Ovary (tissue), 10 donors: ENCODE measurements at regions of chr9 and their contacts with region 1.

Region 1: GRCh38 chr9:34899535-34900158 is 58.4 kb upstream of the PHF24 start:
- DNase-seq: peak; percentile 50 to 79 (median 73)
- H3K4me3 ChIP-seq: no peak overlapping the region
- H3K27ac ChIP-seq: no peak overlapping the region
- H3K4me1 ChIP-seq: no peaks in the 10 kb centered on the region
- H3K27me3 ChIP-seq: no peaks in the 10 kb centered on the region
- CTCF ChIP-seq: peak; percentile 48 to 56 (median 51)
- EP300 ChIP-seq: no peak
- POLR2A ChIP-seq: no peak

Region 2: GRCh38 chr9:34809504-34810186 is 90.0 kb before region 1 on chr9:
- intact Hi-C with region 1: no loop called
- DNase-seq: no peak
- H3K4me3 ChIP-seq: no peak overlapping the region
- H3K27ac ChIP-seq: no peak overlapping the region
- H3K4me1 ChIP-seq: peaks cover 2% of the 10 kb centered on the region
- H3K27me3 ChIP-seq: no peaks in the 10 kb centered on the region
- CTCF ChIP-seq: no peak
- EP300 ChIP-seq: no peak
- POLR2A ChIP-seq: no peak

Region 3: GRCh38 chr9:34989003-34989945 is 89.6 kb after region 1 on chr9 and contains the start of gene DNAJB5:
- intact Hi-C with region 1: loop called in 1 of 4 experiments (anchors 10 kb)
- DNase-seq: peak; percentile 97 to 99 (median 98)
- H3K4me3 ChIP-seq: peak within 1 kb of the TSS; percentile 79
- H3K27ac ChIP-seq: peak within 1 kb of the TSS; percentile 50 to 69
- H3K4me1 ChIP-seq: peaks cover 16% of the 10 kb centered on the region
- H3K27me3 ChIP-seq: no peaks in the 10 kb centered on the region
- CTCF ChIP-seq: no peak
- EP300 ChIP-seq: peak; percentile 8
- POLR2A ChIP-seq: peak; percentile 79
- total RNA-seq, gene DNAJB5: 6.4 to 21.0 (median 11.8) TPM

Region 4: GRCh38 chr9:35096035-35096849 is 196.6 kb after region 1 on chr9 and contains the start of gene PIGO:
- intact Hi-C with region 1: loop called in 2 of 4 experiments (anchors 5 kb)
- DNase-seq: peak; percentile 83 to 92 (median 86)
- H3K4me3 ChIP-seq: peak within 1 kb of the TSS; percentile 97
- H3K27ac ChIP-seq: peak within 1 kb of the TSS; percentile 75 to 92
- H3K4me1 ChIP-seq: peaks cover 6% of the 10 kb centered on the region
- H3K27me3 ChIP-seq: no peaks in the 10 kb centered on the region
- CTCF ChIP-seq: peak; percentile 75 to 90 (median 76)
- EP300 ChIP-seq: no peak
- POLR2A ChIP-seq: peak; percentile 45
- total RNA-seq, gene PIGO: 12.9 to 22.8 (median 19.6) TPM

Region 5: GRCh38 chr9:35161713-35162604 is 262.3 kb after region 1 on chr9 and contains the start of gene UNC13B:
- intact Hi-C with region 1: loop called in 1 of 4 experiments (anchors 10 kb)
- DNase-seq: peak; percentile 91 to 97 (median 96)
- H3K4me3 ChIP-seq: peak within 1 kb of the TSS; percentile 88
- H3K27ac ChIP-seq: peak within 1 kb of the TSS; percentile 55 to 75
- H3K4me1 ChIP-seq: peaks cover 5% of the 10 kb centered on the region
- H3K27me3 ChIP-seq: no peaks in the 10 kb centered on the region
- CTCF ChIP-seq: peak in 1 of 3 donors; percentile 14
- EP300 ChIP-seq: no peak
- POLR2A ChIP-seq: peak; percentile 61
- total RNA-seq, gene UNC13B: 8.0 to 22.2 (median 16.6) TPM

Region 6: DNA sequence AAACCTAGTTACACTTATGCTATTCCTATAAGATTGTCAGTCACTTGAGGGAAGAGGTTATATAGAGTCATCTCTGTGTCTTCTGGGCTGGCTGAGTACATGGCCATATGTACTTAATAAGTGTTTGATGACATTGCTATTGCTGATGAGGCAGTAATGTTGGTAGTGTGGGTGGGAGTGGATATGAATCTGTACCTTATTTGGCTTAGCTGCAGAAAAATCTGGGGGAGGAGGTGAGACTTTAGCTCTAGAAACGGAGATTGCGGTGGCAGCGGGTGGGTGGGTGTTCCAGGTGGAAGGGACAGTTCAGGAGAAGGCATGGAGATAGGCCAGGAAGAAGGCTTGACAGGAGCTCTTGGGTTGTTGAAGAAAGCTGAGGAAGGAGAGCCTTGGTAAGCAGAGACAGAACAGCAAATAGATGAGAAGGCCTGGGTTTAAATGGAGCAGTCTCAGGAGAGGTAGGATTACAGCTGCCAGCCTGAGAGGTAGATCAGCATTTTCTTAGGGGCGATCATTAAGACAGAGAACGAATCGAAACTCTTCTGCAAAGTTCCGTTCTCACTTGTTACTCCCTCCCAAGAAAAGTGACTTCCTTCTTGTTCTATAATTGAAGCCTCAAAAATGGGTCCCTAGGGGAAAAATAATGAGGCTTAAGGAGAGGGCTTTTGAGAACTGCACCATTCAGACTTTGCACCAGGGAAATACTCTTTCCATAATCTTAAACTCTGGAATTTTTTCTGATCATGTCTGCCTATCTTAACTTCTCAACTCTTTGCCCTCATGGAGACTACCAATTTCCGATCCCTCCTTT is 422.6 kb after region 1 on chr9:
- intact Hi-C with region 1: no loop called
- DNase-seq: no peak
- H3K4me3 ChIP-seq: no peak overlapping the region
- H3K27ac ChIP-seq: no peak overlapping the region
- H3K4me1 ChIP-seq: no peaks in the 10 kb centered on the region
- H3K27me3 ChIP-seq: no peaks in the 10 kb centered on the region
- CTCF ChIP-seq: no peak
- EP300 ChIP-seq: no peak
- POLR2A ChIP-seq: no peak